ENCODE measurements at regions of chr7 and their contacts with region 1.

Region 1: GRCh38 chr7:129218514-129219062 is 6.2 kb upstream of the AHCYL2 start:
- DNase-seq: peak; percentile 66 to 97 (median 87)

Region 2: GRCh38 chr7:129017933-129018538 is 200.6 kb before region 1 on chr7:
- intact Hi-C with region 1: no loop called
- DNase-seq: no peak

Region 3: DNA sequence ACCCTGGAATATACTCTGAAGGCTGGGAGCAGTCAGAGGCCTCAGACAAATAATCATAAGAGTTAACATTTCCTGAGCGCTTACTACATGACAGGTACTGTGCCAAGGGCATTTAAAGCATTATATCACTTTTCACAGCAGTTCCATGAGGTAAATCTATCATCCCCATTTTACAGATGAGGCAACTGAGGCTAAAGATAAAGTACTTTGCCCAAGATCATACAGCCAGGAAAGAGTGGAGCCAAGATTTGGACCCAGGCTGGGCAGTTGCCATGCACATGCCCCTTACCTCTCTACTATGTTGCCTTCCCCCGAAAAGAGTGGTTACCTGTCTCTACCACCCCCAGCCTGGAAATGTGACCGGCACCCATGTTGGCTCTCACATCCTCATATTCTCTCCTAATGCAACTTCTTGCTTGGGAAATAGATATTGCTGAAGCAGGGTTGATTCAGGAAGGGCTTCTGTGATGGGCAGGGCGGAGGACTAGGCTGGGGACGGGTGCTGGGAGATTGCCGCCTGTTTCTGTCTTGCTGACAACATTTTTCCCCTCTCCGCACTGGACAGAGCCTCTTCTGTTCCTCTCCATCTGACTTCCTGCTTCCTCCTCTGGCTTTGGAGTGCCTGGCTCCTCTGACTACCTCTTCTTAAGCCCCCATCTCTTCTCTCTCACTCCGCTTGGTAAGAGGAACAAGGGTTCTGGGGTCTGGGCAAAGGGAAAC is 16.4 kb before region 1 on chr7:
- intact Hi-C with region 1: no loop called
- DNase-seq: peak in 1 of 10 donors; percentile 43

Region 4: GRCh38 chr7:129271500-129272355 is 53.1 kb after region 1 on chr7:
- intact Hi-C with region 1: loop called (anchors 1 kb)
- DNase-seq: peak in 3 of 10 donors; percentile 20 to 35 (median 21)

Region 5: GRCh38 chr7:129298268-129298893 is 79.8 kb after region 1 on chr7:
- intact Hi-C with region 1: loop called (anchors 2 kb)
- DNase-seq: peak in 5 of 10 donors; percentile 23 to 77 (median 37)

Region 6: GRCh38 chr7:129367700-129368388 is 149.3 kb after region 1 on chr7:
- intact Hi-C with region 1: loop called (anchors 5 kb)
- DNase-seq: peak; percentile 61 to 95 (median 80)

Region 7: GRCh38 chr7:129468087-129468486 is 249.5 kb after region 1 on chr7:
- intact Hi-C with region 1: loop called (anchors 2 kb)
- DNase-seq: no peak

Region 8: GRCh38 chr7:129644634-129645230 is 426.1 kb after region 1 on chr7:
- intact Hi-C with region 1: loop called (anchors 2 kb)
- DNase-seq: no peak

Region 9: DNA sequence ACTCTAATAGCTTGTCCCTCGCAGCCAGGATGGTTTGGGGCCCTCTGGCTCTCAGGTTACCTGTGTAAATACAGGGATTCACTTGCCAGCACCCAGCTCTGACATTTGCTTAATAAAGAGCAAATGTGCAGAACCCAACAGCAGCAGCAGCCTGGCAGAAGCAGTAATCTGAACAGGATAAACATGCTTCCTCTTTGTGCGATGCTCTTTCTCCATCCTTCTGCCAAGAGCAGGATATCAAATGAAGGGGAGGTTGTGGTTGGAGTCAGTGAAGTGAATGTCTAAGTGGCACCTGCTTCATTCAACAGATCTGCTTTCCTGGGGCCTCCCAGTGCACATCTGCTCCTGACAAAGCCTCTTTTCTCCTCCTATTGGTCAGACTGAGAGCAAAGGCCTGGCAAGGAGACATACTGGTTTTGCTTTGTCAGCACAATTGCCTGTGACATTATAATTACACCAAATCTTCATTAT is 523.2 kb after region 1 on chr7:
- intact Hi-C with region 1: no loop called
- DNase-seq: peak in 2 of 10 donors; percentile 21 to 36

Measured in posterior cingulate gyrus (tissue), 11 donors.